Gastrocnemius medialis (tissue), 4 donors: ENCODE measurements at regions of chr11 and their contacts with region 1.

Region 1: DNA sequence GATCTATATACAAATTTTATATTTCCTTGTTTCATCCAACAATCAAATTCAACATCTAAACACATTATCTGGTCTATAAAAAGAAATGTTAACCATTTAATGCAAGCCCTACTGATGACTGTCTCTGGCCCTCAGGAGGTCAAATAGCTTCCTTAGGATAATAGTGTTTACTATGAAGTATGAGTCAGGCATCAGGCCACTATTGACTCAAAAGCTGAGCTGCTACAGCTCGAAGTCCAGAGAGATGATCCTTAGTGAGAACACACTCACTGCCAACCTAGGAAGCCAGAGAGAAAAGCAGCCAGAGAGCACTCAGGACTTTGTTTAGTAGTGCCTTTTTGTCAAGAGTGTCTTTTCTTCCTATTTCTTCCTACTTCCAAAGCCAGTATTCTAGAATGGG is 171.8 kb downstream of the SOX6 start:
- DNase-seq: peak in 1 of 2 donors; percentile 49
- ATAC-seq: peak; percentile 37 to 93
- H3K4me3 ChIP-seq: no peak overlapping the region
- H3K27ac ChIP-seq: peak overlapping the region; percentile 82 to 87 (median 84)
- H3K4me1 ChIP-seq: peaks cover 44 to 45% of the 10 kb centered on the region in 2 donors
- H3K27me3 ChIP-seq: no peaks in the 10 kb centered on the region
- CTCF ChIP-seq: no peak
- POLR2A ChIP-seq: peak in 1 of 2 donors; percentile 29

Region 2: GRCh38 chr11:15937601-15938120 is 246.9 kb before region 1 on chr11:
- in situ Hi-C with region 1: no loop called
- intact Hi-C with region 1: no loop called
- DNase-seq: no peak
- ATAC-seq: no peak
- H3K4me3 ChIP-seq: no peak overlapping the region
- H3K27ac ChIP-seq: no peak overlapping the region
- H3K4me1 ChIP-seq: peaks cover 0 to 5% of the 10 kb centered on the region in 2 donors
- H3K27me3 ChIP-seq: no peaks in the 10 kb centered on the region
- CTCF ChIP-seq: no peak
- POLR2A ChIP-seq: no peak

Region 3: DNA sequence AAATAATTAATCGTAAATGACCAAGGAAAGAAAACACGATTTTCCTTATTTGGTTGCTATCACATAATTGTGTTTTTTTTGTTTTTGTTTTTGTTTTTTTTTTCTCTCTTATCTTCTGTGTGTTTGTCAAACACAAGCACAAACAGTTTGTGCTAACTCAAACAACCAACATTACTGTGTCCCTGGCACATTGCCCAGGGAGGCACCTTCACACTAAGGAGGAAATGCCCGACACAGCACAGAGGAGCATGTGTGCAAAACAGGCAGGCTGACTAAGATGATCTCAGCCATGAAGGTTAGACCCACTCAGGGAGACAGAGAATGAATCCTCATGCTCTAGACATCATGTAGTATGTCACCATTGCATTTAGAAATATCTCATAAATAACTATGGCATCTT is 41.7 kb after region 1 on chr11:
- in situ Hi-C with region 1: no loop called
- intact Hi-C with region 1: no loop called
- DNase-seq: peak in 1 of 2 donors; percentile 22
- ATAC-seq: peak; percentile 50 to 60
- H3K4me3 ChIP-seq: no peak overlapping the region
- H3K27ac ChIP-seq: no peak overlapping the region
- H3K4me1 ChIP-seq: peaks cover 8 to 12% of the 10 kb centered on the region in 2 donors
- H3K27me3 ChIP-seq: no peaks in the 10 kb centered on the region
- CTCF ChIP-seq: no peak
- POLR2A ChIP-seq: no peak

Region 4: GRCh38 chr11:16261836-16262644 is 77.5 kb after region 1 on chr11:
- in situ Hi-C with region 1: no loop called
- intact Hi-C with region 1: no loop called
- DNase-seq: no peak
- ATAC-seq: no peak
- H3K4me3 ChIP-seq: no peak overlapping the region
- H3K27ac ChIP-seq: no peak overlapping the region
- H3K4me1 ChIP-seq: peaks cover 0 to 12% of the 10 kb centered on the region in 2 donors
- H3K27me3 ChIP-seq: no peaks in the 10 kb centered on the region
- CTCF ChIP-seq: no peak
- POLR2A ChIP-seq: no peak

Region 5: DNA sequence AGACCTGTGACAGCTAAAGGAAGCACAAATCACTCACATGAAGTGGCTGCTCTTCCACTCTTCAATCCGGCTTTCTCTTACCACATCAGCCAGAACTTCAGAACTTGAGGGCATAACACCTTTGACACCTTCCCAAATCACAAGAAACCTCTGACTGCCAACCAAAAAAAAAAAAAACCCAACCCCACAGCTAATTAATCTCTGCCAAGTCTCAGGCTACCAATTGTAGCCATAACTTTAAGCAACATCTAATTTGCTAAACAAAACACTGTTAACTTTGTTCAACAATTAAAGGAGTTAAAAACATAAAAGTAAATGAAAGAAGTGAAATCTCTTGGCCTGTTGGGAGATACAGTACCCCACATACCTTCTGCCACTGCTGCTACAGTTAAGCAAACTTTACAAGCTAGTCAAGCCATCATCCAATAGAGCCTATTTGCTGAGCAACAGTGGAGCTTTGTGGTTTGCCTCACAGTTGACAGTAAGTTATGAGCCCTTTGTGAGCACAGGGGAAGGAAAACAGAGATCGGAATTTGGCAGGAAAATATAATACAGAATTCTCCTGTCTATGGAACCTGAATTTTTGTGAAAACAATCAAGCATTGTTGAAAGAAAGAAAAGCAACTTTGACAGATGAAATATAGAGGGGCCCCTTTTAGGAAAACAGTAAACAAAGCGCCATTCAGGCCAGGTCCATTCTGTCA is 171.6 kb after region 1 on chr11 and contains the start of gene SOX6:
- in situ Hi-C with region 1: no loop called
- intact Hi-C with region 1: loop called (anchors 5 kb)
- DNase-seq: no peak
- ATAC-seq: peak; percentile 4 to 55
- H3K4me3 ChIP-seq: peak within 1 kb of the TSS in 2 of 4 donors; percentile 3 to 8
- H3K27ac ChIP-seq: peak within 1 kb of the TSS; percentile 64 to 73 (median 68)
- H3K4me1 ChIP-seq: peaks cover 50 to 57% of the 10 kb centered on the region in 2 donors
- H3K27me3 ChIP-seq: no peaks in the 10 kb centered on the region
- CTCF ChIP-seq: no peak
- POLR2A ChIP-seq: no peak
- total RNA-seq, gene SOX6: 25.3 to 42.3 (median 37.4) TPM